Breast epithelium (tissue), 4 donors: ENCODE measurements at regions of chr4 and their contacts with region 1.

Region 1: GRCh38 chr4:100302061-100303026 is 112.1 kb upstream of the DDIT4L start:
- DNase-seq: no peak
- H3K4me3 ChIP-seq: no peak overlapping the region
- H3K27ac ChIP-seq: peak overlapping the region in 1 of 2 donors; percentile 8
- H3K4me1 ChIP-seq: no peaks in the 10 kb centered on the region
- H3K27me3 ChIP-seq: no peaks in the 10 kb centered on the region
- CTCF ChIP-seq: no peak
- POLR2A ChIP-seq: no peak

Region 2: GRCh38 chr4:100317032-100317864 is 14.9 kb after region 1 on chr4:
- intact Hi-C with region 1: loop called (anchors 1 kb)
- DNase-seq: no peak
- H3K4me3 ChIP-seq: peak overlapping the region in 1 of 3 donors; percentile 47
- H3K27ac ChIP-seq: peak overlapping the region in 1 of 2 donors; percentile 21
- H3K4me1 ChIP-seq: no peaks in the 10 kb centered on the region
- H3K27me3 ChIP-seq: no peaks in the 10 kb centered on the region
- CTCF ChIP-seq: no peak
- POLR2A ChIP-seq: no peak

Region 3: GRCh38 chr4:100372432-100372831 is 70.1 kb after region 1 on chr4:
- intact Hi-C with region 1: no loop called
- DNase-seq: no peak
- H3K4me3 ChIP-seq: no peak overlapping the region
- H3K27ac ChIP-seq: no peak overlapping the region
- H3K4me1 ChIP-seq: no peaks in the 10 kb centered on the region
- H3K27me3 ChIP-seq: no peaks in the 10 kb centered on the region
- CTCF ChIP-seq: no peak
- POLR2A ChIP-seq: no peak